ENCODE measurements at regions of chr1 and their contacts with region 1.

Region 1: GRCh38 chr1:53732912-53733317 is 6.0 kb downstream of the GLIS1 start:
- DNase-seq: no peak
- ATAC-seq: no peak
- H3K4me3 ChIP-seq: no peak overlapping the region
- H3K27ac ChIP-seq: no peak overlapping the region
- H3K4me1 ChIP-seq: peaks cover 3% of the 10 kb centered on the region; the same call in 1 of the 2 replicates
- H3K27me3 ChIP-seq: peaks cover 11% of the 10 kb centered on the region
- CTCF ChIP-seq: no peak

Region 2: GRCh38 chr1:53654246-53655210 is 78.4 kb before region 1 on chr1:
- CTCF ChIA-PET with region 1: interaction called, 10 read pairs
- POLR2A ChIA-PET with region 1: no interaction called
- in situ Hi-C with region 1: no loop called
- intact Hi-C with region 1: no loop called
- DNase-seq: no peak
- ATAC-seq: no peak
- H3K4me3 ChIP-seq: no peak overlapping the region
- H3K27ac ChIP-seq: no peak overlapping the region
- H3K4me1 ChIP-seq: no peaks in the 10 kb centered on the region
- H3K27me3 ChIP-seq: peaks cover 7% of the 10 kb centered on the region; the same call in 1 of the 2 replicates
- CTCF ChIP-seq: no peak